ENCODE measurements at regions of chr10 and their contacts with region 1.

Region 1: GRCh38 chr10:89426230-89426868 is 12.0 kb downstream of the IFIT5 start:
- DNase-seq: no peak
- H3K4me3 ChIP-seq: no peak overlapping the region
- H3K27ac ChIP-seq: no peak overlapping the region
- H3K4me1 ChIP-seq: no peaks in the 10 kb centered on the region
- H3K27me3 ChIP-seq: no peaks in the 10 kb centered on the region
- CTCF ChIP-seq: peak; percentile 63 to 75 (median 75)
- POLR2A ChIP-seq: no peak

Region 2: DNA sequence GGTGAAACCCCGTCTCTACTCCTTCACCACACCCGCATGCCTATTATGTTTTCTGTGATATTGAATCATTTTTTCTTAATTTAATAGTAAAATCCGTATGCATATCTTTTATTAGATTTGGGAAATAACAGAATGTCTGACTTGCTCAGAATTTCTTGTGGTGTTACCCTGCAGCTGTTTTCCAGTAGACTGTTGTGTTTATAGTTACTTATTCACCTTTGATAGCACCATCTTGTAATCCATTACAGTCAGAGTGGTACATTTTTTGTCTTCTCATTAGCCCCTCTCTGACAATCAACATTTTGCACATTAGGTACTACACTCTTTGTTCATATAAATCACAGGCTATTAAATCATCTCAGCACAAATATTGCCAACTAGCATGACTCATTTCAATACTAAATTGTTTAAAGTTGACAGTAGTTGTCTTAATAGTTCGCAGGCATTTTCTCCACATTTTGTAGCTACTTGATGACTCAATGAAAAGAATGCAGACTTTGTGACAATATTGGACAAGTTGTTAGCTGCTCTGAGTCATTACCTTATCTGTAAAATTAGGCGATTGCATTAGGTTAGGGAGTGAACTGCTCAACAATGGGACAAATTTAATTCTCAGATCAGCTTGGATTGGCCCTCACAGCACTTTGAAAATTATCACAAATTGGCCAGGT is 126.8 kb after region 1 on chr10:
- intact Hi-C with region 1: loop called (anchors 10 kb)
- DNase-seq: no peak
- H3K4me3 ChIP-seq: no peak overlapping the region
- H3K27ac ChIP-seq: no peak overlapping the region
- H3K4me1 ChIP-seq: no peaks in the 10 kb centered on the region
- H3K27me3 ChIP-seq: no peaks in the 10 kb centered on the region
- CTCF ChIP-seq: no peak
- POLR2A ChIP-seq: no peak

Region 3: GRCh38 chr10:89759531-89759930 is 333.2 kb after region 1 on chr10:
- intact Hi-C with region 1: no loop called
- DNase-seq: no peak
- H3K4me3 ChIP-seq: no peak overlapping the region
- H3K27ac ChIP-seq: no peak overlapping the region
- H3K4me1 ChIP-seq: no peaks in the 10 kb centered on the region
- H3K27me3 ChIP-seq: no peaks in the 10 kb centered on the region
- CTCF ChIP-seq: no peak
- POLR2A ChIP-seq: no peak